MCF 10A (cell line): ENCODE measurements at regions of chr13 and their contacts with region 1.

Region 1: GRCh38 chr13:23466144-23467002 is 32.9 kb upstream of the SACS start:
- DNase-seq: peak; percentile 73
- H3K4me3 Mint-ChIP-seq: peak overlapping the region; percentile 73
- H3K27ac Mint-ChIP-seq: peak overlapping the region; percentile 31
- H3K4me1 Mint-ChIP-seq: peaks cover 5% of the 10 kb centered on the region
- H3K27me3 Mint-ChIP-seq: peaks cover 18% of the 10 kb centered on the region
- CTCF ChIP-seq: peak; percentile 53

Region 2: DNA sequence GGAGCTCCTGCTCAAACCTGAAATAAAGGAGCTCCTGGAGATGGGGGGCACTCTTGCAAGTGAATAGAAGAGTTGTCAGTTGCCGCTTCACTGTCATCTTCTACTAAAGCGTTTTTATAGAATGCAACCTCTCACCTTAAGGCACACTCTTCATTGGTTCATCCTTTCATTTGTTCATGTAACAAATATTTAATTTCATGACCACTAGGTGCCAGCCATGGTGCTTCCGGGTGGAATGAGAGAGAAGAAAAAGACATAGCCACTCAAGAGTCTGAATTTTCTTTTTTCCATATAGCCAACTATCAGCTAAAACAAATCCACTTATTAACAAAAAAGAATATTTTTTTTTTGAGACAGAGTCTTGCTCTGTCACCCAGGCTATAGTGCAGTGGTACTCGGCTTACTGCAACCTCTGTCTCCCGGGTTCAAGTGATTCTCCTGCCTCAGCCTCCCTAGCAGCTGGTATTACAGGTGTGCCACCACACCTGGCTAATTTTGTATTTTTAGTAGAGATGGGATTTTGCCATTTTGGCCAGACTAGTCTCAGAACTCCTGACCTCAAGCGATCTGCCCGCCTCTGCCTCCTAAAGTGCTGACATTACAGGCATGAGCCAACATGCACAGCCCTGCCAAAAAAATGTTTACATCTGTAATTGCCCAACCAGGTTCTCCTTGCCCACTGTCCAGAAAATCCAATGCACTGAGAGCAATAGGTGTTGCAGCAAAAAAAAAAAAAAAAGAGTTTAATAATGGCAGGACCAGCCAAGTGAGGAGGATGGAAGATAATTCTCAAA is 10.8 kb before region 1 on chr13:
- CTCF ChIA-PET with region 1: interaction called, 26 read pairs
- POLR2A ChIA-PET with region 1: interaction called, 4 read pairs
- intact Hi-C with region 1: no loop called
- DNase-seq: peak; percentile 68
- H3K4me3 Mint-ChIP-seq: no peak overlapping the region
- H3K27ac Mint-ChIP-seq: no peak overlapping the region
- H3K4me1 Mint-ChIP-seq: peaks cover 13% of the 10 kb centered on the region
- H3K27me3 Mint-ChIP-seq: no peaks in the 10 kb centered on the region
- CTCF ChIP-seq: no peak

Region 3: GRCh38 chr13:23605831-23606230 is 139.5 kb after region 1 on chr13:
- CTCF ChIA-PET with region 1: no interaction called
- POLR2A ChIA-PET with region 1: no interaction called
- intact Hi-C with region 1: no loop called
- DNase-seq: no peak
- H3K4me3 Mint-ChIP-seq: no peak overlapping the region
- H3K27ac Mint-ChIP-seq: no peak overlapping the region
- H3K4me1 Mint-ChIP-seq: no peaks in the 10 kb centered on the region
- H3K27me3 Mint-ChIP-seq: peaks cover 56% of the 10 kb centered on the region
- CTCF ChIP-seq: no peak

Region 4: GRCh38 chr13:23707674-23708073 is 241.3 kb after region 1 on chr13:
- CTCF ChIA-PET with region 1: no interaction called
- POLR2A ChIA-PET with region 1: interaction called, 3 read pairs
- intact Hi-C with region 1: loop called (anchors 1 kb)
- DNase-seq: peak; percentile 26
- H3K4me3 Mint-ChIP-seq: no peak overlapping the region
- H3K27ac Mint-ChIP-seq: no peak overlapping the region
- H3K4me1 Mint-ChIP-seq: no peaks in the 10 kb centered on the region
- H3K27me3 Mint-ChIP-seq: no peaks in the 10 kb centered on the region
- CTCF ChIP-seq: peak; percentile 11

Region 5: GRCh38 chr13:23888658-23889614 is 422.6 kb after region 1 on chr13 and contains the start of gene MIPEP:
- CTCF ChIA-PET with region 1: interaction called, 7 read pairs
- POLR2A ChIA-PET with region 1: interaction called, 9 read pairs
- intact Hi-C with region 1: loop called (anchors 5 kb)
- DNase-seq: peak; percentile 95
- H3K4me3 Mint-ChIP-seq: peak within 1 kb of the TSS; percentile 89
- H3K27ac Mint-ChIP-seq: peak within 1 kb of the TSS; percentile 67
- H3K4me1 Mint-ChIP-seq: peaks cover 11% of the 10 kb centered on the region
- H3K27me3 Mint-ChIP-seq: no peaks in the 10 kb centered on the region
- CTCF ChIP-seq: peak; percentile 58
- total RNA-seq, gene MIPEP: 19.1 and 24.7 TPM in 2 replicates